A549 (cell line): ENCODE measurements at regions of chr10 and their contacts with region 1.

Region 1: DNA sequence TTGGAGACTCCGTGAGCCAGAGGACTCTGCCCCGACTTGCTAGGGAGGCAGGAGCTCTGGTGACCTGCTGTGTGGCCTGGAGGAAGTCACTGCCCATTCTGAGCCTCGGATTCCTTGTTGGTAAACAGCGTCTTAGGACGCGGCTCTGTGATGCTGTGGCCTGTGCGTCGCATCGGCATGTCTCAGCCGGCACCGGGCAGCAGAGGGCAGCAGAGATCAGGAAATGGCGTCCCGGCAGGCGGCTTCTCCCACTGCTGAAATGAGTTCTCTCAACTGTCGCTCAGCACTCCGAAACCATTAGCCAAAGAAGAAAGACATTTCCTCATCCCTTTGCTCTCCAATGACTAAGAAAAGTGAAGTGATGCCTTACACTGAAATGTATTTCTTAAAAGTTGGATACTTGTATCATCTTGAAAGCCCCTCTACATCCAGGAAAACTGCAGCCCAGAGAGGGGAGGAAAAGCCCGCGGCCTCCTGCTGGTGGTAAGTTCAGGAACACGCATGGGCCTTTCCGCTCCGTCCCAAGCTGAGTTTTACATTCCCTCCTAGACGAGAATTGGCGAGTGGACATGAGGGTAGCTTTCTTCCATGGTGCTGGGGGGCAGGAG is 91.7 kb downstream of the WDR11 start:
- DNase-seq: peak; percentile 71 to 78
- ATAC-seq: peak; percentile 95 to 98
- H3K4me3 ChIP-seq: no peak overlapping the region
- H3K27ac ChIP-seq: no peak overlapping the region
- H3K4me1 ChIP-seq: no peaks in the 10 kb centered on the region
- CTCF ChIP-seq: peak; percentile 90
- EP300 ChIP-seq: no peak
- POLR2A ChIP-seq: no peak
- RAD21 ChIP-seq: peak; percentile 96 to 97

Region 2: DNA sequence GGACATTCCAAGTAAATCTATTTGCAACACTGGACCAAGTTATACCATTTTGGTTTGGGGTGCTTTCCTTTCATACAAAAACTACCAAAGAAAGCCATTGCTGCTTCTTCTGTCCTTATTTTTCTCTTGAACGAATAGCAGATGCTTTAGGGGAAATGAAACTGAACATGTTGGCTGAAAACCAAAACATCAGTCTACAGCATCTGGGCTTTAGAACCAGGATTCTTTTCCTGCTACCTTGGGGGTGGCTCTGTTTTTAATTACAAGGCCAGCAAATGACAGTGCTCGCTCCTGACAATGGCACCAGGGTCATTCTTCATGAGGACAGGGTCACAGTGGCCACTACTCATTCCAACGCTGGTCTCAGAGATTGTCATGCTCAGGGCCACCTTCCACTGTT is 11.5 kb before region 1 on chr10:
- CTCF ChIA-PET with region 1: interaction called, 45 read pairs
- POLR2A ChIA-PET with region 1: no interaction called
- DNase-seq: no peak
- ATAC-seq: no peak
- H3K4me3 ChIP-seq: no peak overlapping the region
- H3K27ac ChIP-seq: no peak overlapping the region
- H3K4me1 ChIP-seq: no peaks in the 10 kb centered on the region
- CTCF ChIP-seq: no peak
- EP300 ChIP-seq: no peak
- POLR2A ChIP-seq: no peak
- RAD21 ChIP-seq: no peak

Region 3: DNA sequence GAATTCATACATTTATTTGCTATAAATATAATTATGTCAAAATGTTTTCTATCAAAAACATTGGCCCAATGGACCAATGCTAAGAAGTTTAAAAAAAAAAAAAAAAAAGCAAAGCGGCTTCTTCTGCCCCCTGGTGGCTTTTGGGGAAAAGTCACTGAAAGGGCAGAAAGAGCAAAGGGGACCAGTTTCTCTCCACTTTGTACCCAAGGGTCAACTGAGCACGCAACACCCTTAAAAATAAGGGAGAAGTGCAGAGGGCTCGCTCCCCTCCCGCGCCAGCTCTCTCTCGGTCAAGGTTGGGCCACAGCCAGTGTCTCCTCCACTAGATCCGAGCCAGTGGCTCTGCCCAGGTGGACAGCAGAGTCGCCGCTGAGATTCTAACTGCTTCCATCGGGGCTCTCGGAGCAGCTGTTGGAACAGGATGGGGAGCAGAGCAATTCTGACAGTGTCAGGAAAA is 791.7 kb after region 1 on chr10:
- CTCF ChIA-PET with region 1: interaction called, 21 read pairs
- POLR2A ChIA-PET with region 1: no interaction called
- DNase-seq: peak; percentile 12 to 44
- ATAC-seq: peak; percentile 58 to 78; a peak in 4 of 6 replicates
- H3K4me3 ChIP-seq: peak overlapping the region; percentile 16; the same call in 2 of the 3 replicates
- H3K27ac ChIP-seq: no peak overlapping the region
- H3K4me1 ChIP-seq: peaks cover 4% of the 10 kb centered on the region; the same call in 2 of the 3 replicates
- CTCF ChIP-seq: peak; percentile 92
- EP300 ChIP-seq: no peak
- POLR2A ChIP-seq: no peak
- RAD21 ChIP-seq: peak; percentile 62 to 70

Region 4: GRCh38 chr10:121886997-121887622 is 944.2 kb after region 1 on chr10:
- CTCF ChIA-PET with region 1: interaction called, 24 read pairs
- POLR2A ChIA-PET with region 1: no interaction called
- DNase-seq: peak; percentile 78
- ATAC-seq: peak; percentile 97 to 98
- H3K4me3 ChIP-seq: no peak overlapping the region
- H3K27ac ChIP-seq: no peak overlapping the region
- H3K4me1 ChIP-seq: peaks cover 9% of the 10 kb centered on the region; the same call in 2 of the 3 replicates
- CTCF ChIP-seq: peak; percentile 78
- EP300 ChIP-seq: no peak
- POLR2A ChIP-seq: no peak
- RAD21 ChIP-seq: peak; percentile 68 to 75